ENCODE measurements at regions of chr15 and their contacts with region 1.

Region 1: GRCh38 chr15:42120285-42120684 is 25.9 kb upstream of the PLA2G4D start:
- DNase-seq: no peak
- H3K4me3 ChIP-seq: no peak overlapping the region
- H3K27ac ChIP-seq: no peak overlapping the region
- H3K4me1 ChIP-seq: no peaks in the 10 kb centered on the region
- H3K27me3 ChIP-seq: no peaks in the 10 kb centered on the region
- CTCF ChIP-seq: no peak
- POLR2A ChIP-seq: no peak

Region 2: GRCh38 chr15:42107473-42107872 is 12.8 kb before region 1 on chr15:
- intact Hi-C with region 1: loop called (anchors 1 kb)
- DNase-seq: no peak
- H3K4me3 ChIP-seq: peak overlapping the region in 1 of 3 donors; percentile 15
- H3K27ac ChIP-seq: no peak overlapping the region
- H3K4me1 ChIP-seq: no peaks in the 10 kb centered on the region
- H3K27me3 ChIP-seq: no peaks in the 10 kb centered on the region
- CTCF ChIP-seq: no peak
- POLR2A ChIP-seq: no peak

Region 3: DNA sequence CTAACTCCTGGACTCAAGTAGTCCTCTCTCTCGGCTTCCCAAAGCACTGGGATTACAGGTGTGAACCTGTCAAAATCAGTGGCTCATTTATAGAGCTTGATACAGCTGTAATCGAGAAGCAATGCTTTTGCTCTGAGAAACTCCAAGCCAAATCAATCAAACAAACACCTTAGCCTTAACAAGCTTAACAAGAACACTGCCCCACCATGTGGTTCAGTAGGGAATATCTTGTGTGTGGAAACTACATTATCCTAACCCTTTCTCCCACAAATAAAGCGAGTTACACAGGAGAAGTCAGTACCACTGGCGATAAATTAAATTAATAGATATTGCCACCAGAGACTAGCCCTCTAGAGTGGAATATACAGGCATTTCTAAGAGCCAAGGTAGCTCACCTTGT is 602.8 kb after region 1 on chr15:
- intact Hi-C with region 1: no loop called
- DNase-seq: no peak
- H3K4me3 ChIP-seq: no peak overlapping the region
- H3K27ac ChIP-seq: no peak overlapping the region
- H3K4me1 ChIP-seq: no peaks in the 10 kb centered on the region
- H3K27me3 ChIP-seq: no peaks in the 10 kb centered on the region
- CTCF ChIP-seq: no peak
- POLR2A ChIP-seq: no peak

Region 4: GRCh38 chr15:43824302-43825246 is 1704.3 kb after region 1 on chr15 and contains the start of gene MFAP1:
- intact Hi-C with region 1: no loop called
- DNase-seq: peak; percentile 90 to 94
- H3K4me3 ChIP-seq: peak within 1 kb of the TSS; percentile 67 to 93 (median 83)
- H3K27ac ChIP-seq: peak within 1 kb of the TSS; percentile 90 to 97
- H3K4me1 ChIP-seq: peaks cover 0 to 5% of the 10 kb centered on the region in 2 donors
- H3K27me3 ChIP-seq: no peaks in the 10 kb centered on the region
- CTCF ChIP-seq: no peak
- POLR2A ChIP-seq: peak; percentile 71
- total RNA-seq, gene MFAP1: 14.4 to 26.3 (median 15.7) TPM

Measured in breast epithelium (tissue), 4 donors.